Cardiac septum (tissue), 1 donor: ENCODE measurements at regions of chrX and their contacts with region 1.

Region 1: GRCh38 chrX:41010188-41010846 is 74.9 kb upstream of the USP9X start:
- DNase-seq: peak; percentile 90

Region 2: GRCh38 chrX:40058719-40059118 is 951.6 kb before region 1 on chrX:
- intact Hi-C with region 1: no loop called
- DNase-seq: peak; percentile 59

Region 3: GRCh38 chrX:40877887-40878286 is 132.4 kb before region 1 on chrX:
- intact Hi-C with region 1: loop called (anchors 10 kb)
- DNase-seq: no peak

Region 4: GRCh38 chrX:41084044-41084892 is 74.0 kb after region 1 on chrX:
- intact Hi-C with region 1: loop called (anchors 1 kb)
- DNase-seq: peak; percentile 98